ENCODE measurements at regions of chr6 and their contacts with region 1.

Region 1: GRCh38 chr6:32952817-32953739 is at the start of gene HLA-DMA:
- DNase-seq: peak; percentile 93
- H3K4me3 ChIP-seq: no peak within 1 kb of the TSS
- CTCF ChIP-seq: peak; percentile 84

Region 2: DNA sequence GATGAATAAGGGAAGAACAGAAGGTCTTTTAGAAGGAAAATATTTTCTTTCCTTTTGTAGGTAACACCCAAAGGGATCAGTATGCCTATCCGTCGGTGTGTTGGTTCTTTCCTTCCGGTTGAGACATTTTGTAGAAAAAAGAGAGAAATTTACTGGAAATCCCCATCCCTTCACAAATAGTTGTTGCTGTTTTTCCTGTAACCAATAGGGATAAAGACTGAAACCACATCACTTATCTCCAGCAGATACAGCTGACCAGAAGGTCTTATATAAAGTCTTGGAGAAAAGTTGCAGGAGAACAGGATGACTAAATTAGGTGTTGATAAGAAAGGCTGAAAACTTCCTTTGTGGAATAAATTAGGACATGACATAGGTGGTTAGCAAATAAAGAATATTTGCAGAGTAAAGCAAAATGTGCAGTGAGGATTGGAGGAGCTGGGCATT is 348.6 kb before region 1 on chr6:
- CTCF ChIA-PET with region 1: no interaction called
- POLR2A ChIA-PET with region 1: no interaction called
- DNase-seq: no peak
- H3K4me3 ChIP-seq: no peak overlapping the region
- CTCF ChIP-seq: no peak

Region 3: DNA sequence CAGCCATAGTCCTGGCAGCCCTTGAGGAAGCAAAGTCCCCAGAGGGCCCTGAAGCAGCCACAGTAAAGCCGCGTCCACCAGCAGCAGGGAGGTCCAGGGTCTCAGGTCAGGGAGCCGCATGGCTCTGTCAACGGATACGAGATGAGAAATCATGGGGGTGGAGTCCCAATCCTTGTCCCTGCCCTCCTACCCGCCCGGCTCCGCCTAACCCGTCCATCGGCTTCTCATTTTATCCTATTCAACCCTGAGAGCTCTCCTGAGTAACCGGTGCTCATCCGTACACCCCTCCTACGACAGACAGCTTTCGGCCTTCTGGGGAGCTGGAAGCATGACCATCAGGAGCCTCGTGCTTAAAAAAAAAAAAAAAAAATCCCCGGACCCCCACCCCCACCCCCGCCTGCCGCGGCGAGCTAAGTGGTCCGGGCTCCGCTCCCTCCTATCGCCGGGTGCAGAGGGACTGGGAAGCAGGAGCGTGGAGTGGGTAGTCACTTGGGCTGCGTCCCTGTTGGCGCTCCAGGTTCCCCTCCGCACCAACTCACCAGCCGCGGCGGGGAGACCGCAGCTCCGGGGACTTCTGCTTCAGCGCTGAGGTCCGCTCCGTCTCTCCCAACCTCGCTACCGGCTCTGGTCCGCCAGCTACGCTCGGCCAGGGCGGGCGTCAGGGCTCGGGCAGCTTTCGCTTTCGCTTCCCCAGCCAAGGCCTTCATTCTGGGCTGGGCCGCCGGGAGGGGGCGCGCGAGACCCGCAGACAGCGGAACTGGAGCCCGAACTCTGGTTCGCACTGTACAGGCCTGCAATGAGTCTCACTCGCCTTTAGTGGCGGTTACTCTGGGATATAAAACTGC is 114.7 kb before region 1 on chr6 and contains the start of gene TAP2:
- CTCF ChIA-PET with region 1: interaction called, 25 read pairs
- POLR2A ChIA-PET with region 1: no interaction called
- DNase-seq: peak; percentile 47
- H3K4me3 ChIP-seq: peak within 1 kb of the TSS; percentile 96
- CTCF ChIP-seq: peak; percentile 97

Region 4: DNA sequence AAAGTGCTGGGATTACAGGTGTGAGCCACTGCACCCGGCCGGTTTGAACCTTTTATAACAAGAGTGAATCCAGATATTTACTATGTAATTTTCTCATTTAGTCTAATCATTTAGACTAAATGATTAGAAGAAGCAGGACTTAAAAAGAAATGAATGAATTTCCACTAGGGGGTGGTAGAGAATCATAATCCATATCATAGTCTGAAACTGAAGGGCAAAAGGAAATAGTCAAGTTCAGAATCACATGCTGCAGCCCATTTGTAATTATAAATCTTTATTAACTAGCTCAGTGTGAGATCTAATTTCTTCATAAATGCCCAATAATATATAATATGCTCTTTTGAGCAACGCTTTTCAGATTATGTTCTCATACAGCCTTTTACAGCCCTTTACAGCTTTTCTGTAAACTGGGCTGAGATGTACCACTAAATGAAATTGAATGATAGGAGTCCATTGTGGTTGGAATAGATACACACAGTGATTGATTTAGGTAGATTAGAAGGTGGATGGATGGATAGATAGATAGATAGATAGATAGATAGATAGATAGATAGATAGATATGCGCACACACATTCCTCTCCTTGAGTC is 67.3 kb before region 1 on chr6:
- CTCF ChIA-PET with region 1: interaction called, 95 read pairs
- POLR2A ChIA-PET with region 1: no interaction called
- DNase-seq: no peak
- H3K4me3 ChIP-seq: no peak overlapping the region
- CTCF ChIP-seq: peak; percentile 19

Region 5: GRCh38 chr6:32906539-32906938 is 46.5 kb before region 1 on chr6:
- CTCF ChIA-PET with region 1: interaction called, 22 read pairs
- POLR2A ChIA-PET with region 1: no interaction called
- DNase-seq: no peak
- H3K4me3 ChIP-seq: no peak overlapping the region
- CTCF ChIP-seq: no peak

Region 6: GRCh38 chr6:32933636-32934085 is 19.4 kb before region 1 on chr6:
- CTCF ChIA-PET with region 1: interaction called, 124 read pairs
- POLR2A ChIA-PET with region 1: no interaction called
- DNase-seq: no peak
- H3K4me3 ChIP-seq: no peak overlapping the region
- CTCF ChIP-seq: peak; percentile 73

Region 7: DNA sequence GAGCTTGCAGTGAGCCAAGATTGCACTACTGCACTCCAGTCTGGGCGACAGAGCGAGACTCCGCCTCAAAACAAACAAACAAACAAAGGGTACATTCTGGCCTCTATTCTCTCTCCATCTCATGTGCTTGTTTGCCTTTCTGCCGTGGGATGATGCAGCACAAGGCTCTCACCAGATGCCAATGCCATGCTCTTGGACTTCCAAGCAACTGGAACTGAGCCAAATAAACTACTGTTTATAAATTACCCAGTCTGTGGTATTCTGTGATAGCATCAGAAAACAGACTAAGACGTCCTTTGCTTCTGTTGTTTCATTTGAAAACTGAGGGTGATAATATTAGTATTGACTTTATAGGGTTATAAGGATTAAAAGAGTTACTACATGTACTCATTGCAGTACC is 11.7 kb after region 1 on chr6:
- CTCF ChIA-PET with region 1: interaction called, 182 read pairs
- POLR2A ChIA-PET with region 1: interaction called, 5 read pairs
- DNase-seq: no peak
- H3K4me3 ChIP-seq: no peak overlapping the region
- CTCF ChIP-seq: no peak

Region 8: DNA sequence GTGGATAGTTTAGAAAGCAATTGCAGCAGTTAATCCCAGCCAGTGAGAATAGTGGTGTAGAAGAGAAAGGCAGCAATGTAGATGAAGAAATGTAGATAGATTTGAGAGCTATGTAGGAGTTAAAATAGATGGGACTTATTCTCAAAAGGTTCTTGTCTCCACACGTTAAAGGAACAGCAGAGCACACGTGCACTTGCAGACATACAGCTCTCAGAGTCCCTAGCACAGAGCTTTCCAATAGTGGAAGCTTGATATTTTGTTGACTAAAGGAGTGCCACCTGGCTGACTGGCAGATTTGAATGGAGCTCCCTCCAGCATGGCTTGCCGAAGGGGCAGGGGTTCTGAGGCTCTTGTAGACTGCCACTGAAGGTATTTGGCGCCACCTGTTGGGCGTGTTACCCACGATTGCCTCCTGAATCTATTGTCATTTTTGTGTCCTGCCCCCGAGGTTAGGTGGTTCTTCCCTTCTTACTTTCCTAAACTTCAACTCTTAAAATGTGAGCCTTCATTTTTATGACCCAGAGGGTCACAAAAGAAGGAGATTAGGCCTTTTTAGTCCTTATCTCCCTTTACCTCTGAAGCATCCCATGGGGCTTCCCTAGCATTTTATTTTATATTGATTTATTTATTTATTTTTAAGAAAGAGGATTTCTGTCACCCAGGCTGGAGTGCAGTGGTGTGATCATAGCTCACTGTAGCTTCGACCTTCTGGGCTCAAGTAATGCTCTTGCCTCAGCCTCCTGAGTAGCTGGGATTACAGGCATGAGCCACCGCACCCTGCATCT is 31.7 kb after region 1 on chr6:
- CTCF ChIA-PET with region 1: interaction called, 81 read pairs
- POLR2A ChIA-PET with region 1: interaction called, 3 read pairs
- DNase-seq: no peak
- H3K4me3 ChIP-seq: no peak overlapping the region
- CTCF ChIP-seq: peak; percentile 82

Region 9: DNA sequence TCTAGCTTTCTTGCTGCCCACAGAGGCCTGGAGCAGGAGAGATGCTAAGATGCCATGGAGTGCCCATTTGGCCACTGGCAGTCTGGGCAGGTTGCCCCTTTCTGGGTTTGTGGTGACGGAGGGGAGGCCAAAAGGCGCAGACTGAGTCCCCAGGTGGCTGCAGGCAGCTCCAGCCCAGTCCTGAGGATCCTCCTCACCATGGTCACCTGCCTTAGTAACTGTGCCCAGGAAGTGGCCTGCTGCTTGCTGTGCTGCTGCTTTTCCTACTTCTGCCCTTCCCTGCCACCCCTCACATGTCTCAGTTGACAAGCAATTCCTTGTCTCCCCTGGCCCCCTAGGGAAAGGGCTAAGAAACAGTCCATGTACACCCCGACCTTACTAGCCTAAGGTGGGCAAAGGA is 403.2 kb after region 1 on chr6:
- CTCF ChIA-PET with region 1: no interaction called
- POLR2A ChIA-PET with region 1: no interaction called
- DNase-seq: no peak
- H3K4me3 ChIP-seq: no peak overlapping the region
- CTCF ChIP-seq: no peak